T-cell (primary cell): ENCODE measurements at regions of chr3 and their contacts with region 1.

Region 1: GRCh38 chr3:143956838-143957237 is 14.8 kb upstream of the DIPK2A start:
- DNase-seq: no peak
- ATAC-seq: no peak
- H3K4me3 ChIP-seq: no peak overlapping the region
- H3K4me3 Mint-ChIP-seq: no peak overlapping the region
- H3K27ac ChIP-seq: no peak overlapping the region
- H3K27ac Mint-ChIP-seq: no peak overlapping the region
- H3K4me1 ChIP-seq: peaks cover 0 to 3% of the 10 kb centered on the region in 2 experiments
- H3K4me1 Mint-ChIP-seq: peaks cover 0 to 9% (median 9%) of the 10 kb centered on the region in 3 donors
- H3K27me3 ChIP-seq: peaks cover 0 to 4% of the 10 kb centered on the region in 2 experiments
- H3K27me3 Mint-ChIP-seq: peaks cover 15% of the 10 kb centered on the region in 2 donors

Region 2: DNA sequence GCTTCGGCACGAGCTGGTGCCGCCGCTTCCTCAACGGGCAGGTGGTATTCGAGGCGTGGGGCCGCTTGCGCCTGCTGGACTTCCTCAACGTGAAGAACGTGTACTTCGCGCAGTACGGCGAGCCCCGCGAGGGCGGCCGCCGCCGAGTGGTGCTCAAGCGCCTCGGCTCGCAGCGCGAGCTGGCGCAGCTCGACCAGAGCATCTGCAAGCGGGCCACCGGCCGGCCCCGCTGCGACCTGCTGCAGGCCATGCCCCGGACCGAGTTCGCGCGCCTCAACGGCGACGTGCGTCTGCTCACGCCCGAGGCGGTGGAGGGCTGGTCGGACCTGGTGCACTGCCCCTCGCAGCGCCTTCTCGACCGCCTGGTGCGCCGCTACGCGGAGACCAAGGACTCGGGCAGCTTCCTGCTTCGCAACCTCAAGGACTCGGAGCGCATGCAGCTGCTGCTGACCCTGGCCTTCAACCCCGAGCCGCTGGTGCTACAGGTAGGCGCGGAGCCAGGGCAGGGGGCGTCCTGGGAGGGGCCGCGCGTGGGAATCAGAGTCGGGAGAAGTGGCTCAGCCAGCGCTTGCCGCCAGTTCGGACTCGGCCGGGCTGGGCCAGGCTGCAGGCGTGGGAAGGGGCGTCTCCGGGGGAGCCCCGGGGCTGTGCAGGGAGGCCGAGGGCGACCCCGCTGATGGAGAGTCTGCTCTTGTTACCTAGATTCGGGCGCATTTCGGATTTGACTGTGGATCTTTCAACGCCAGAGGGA is 15.8 kb after region 1 on chr3:
- CTCF ChIA-PET with region 1: interaction called, 6 to 16 read pairs
- POLR2A ChIA-PET with region 1: interaction called, 3 to 5 read pairs
- DNase-seq: peak; percentile 9 to 89 (median 48)
- ATAC-seq: peak; percentile 7 to 28 (median 17)
- H3K4me3 ChIP-seq: peak overlapping the region; percentile 91 to 92
- H3K4me3 Mint-ChIP-seq: peak overlapping the region; percentile 99 to 100 (median 100)
- H3K27ac ChIP-seq: peak overlapping the region; percentile 74
- H3K27ac Mint-ChIP-seq: peak overlapping the region; percentile 98
- H3K4me1 ChIP-seq: peaks cover 8 to 21% of the 10 kb centered on the region in 2 experiments
- H3K4me1 Mint-ChIP-seq: peaks cover 34 to 45% (median 40%) of the 10 kb centered on the region in 3 donors
- H3K27me3 ChIP-seq: no peaks in the 10 kb centered on the region
- H3K27me3 Mint-ChIP-seq: no peaks in the 10 kb centered on the region